K562 (cell line): ENCODE measurements at regions of chr3 and their contacts with region 1.

Region 1: GRCh38 chr3:138834359-138835212 is at the start of gene PIK3CB:
- DNase-seq: peak; percentile 91 to 94 (median 92)
- ATAC-seq: peak; percentile 88
- H3K4me3 ChIP-seq: peak within 1 kb of the TSS; percentile 99
- H3K27ac ChIP-seq: peak within 1 kb of the TSS; percentile 91
- H3K4me1 ChIP-seq: peaks cover 8 to 9% of the 10 kb centered on the region in 2 experiments; a peak in 4 of 5 replicates
- H3K27me3 ChIP-seq: no peaks in the 10 kb centered on the region
- CTCF ChIP-seq: peak; percentile 59 to 97 (median 75)
- EP300 ChIP-seq: peak; percentile 2; the same call in 1 of the 2 replicates
- POLR2A ChIP-seq: peak; percentile 94
- RAD21 ChIP-seq: peak; percentile 61 to 70
- polyA plus RNA-seq, gene PIK3CB: 15.3 to 19.6 TPM

Region 2: DNA sequence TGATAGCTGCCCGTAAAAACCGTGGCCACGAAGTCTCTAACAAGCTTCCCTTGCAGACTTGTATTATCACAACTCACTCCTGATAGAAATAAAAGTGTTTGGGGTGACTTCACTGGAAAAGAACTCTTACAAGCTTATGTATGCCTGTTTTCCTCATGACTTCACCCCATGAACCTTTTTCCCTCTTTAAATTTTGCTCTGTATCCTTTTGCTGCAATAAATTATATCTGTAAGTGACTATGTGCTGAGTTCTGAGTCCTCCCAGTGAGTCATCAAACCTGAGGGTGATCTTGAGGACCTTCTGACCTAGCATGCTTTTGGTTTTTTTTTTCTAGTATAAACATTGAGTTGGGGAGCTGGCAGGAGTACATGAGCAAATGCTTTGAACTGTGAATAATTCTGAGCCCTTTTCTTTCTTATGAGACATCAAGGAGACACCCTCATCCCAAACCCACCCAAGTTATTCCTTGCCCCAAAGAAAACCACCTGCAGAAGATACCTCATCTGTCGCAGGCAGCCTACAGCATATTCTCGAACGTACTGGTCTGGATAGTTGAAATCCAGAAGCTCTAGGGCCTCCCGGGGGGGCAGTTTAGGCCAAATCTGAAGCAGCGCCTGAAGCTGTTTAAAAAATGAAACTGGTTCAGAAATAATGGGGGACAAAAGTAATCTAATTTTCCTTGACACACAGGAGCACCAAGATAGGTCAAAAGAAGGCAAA is 140.1 kb before region 1 on chr3:
- CTCF ChIA-PET with region 1: no interaction called
- POLR2A ChIA-PET with region 1: no interaction called
- in situ Hi-C with region 1: no loop called
- intact Hi-C with region 1: loop called (anchors 10 kb)
- DNase-seq: peak in 3 of 4 experiments; percentile 21 to 76 (median 53)
- ATAC-seq: peak; percentile 79
- H3K4me3 ChIP-seq: no peak overlapping the region
- H3K27ac ChIP-seq: peak overlapping the region; percentile 62; the same call in 2 of the 3 replicates
- H3K4me1 ChIP-seq: peaks cover 0 to 16% of the 10 kb centered on the region in 2 experiments; a peak in 4 of 5 replicates
- H3K27me3 ChIP-seq: no peaks in the 10 kb centered on the region
- CTCF ChIP-seq: no peak
- EP300 ChIP-seq: peak; percentile 31; the same call in 1 of the 2 replicates
- POLR2A ChIP-seq: no peak
- RAD21 ChIP-seq: no peak

Region 3: GRCh38 chr3:138862924-138863775 is 28.6 kb after region 1 on chr3:
- CTCF ChIA-PET with region 1: no interaction called
- POLR2A ChIA-PET with region 1: interaction called, 5 read pairs
- in situ Hi-C with region 1: no loop called
- intact Hi-C with region 1: loop called (anchors 2 kb)
- DNase-seq: peak; percentile 62 to 84 (median 71)
- ATAC-seq: peak; percentile 89
- H3K4me3 ChIP-seq: no peak overlapping the region; the same call in 1 of the 2 replicates
- H3K27ac ChIP-seq: peak overlapping the region; percentile 75
- H3K4me1 ChIP-seq: peaks cover 20 to 31% of the 10 kb centered on the region in 2 experiments; a peak in 4 of 5 replicates
- H3K27me3 ChIP-seq: no peaks in the 10 kb centered on the region
- CTCF ChIP-seq: no peak
- EP300 ChIP-seq: peak; percentile 63; the same call in 1 of the 2 replicates
- POLR2A ChIP-seq: no peak
- RAD21 ChIP-seq: no peak

Region 4: GRCh38 chr3:138875754-138876664 is 41.4 kb after region 1 on chr3:
- CTCF ChIA-PET with region 1: no interaction called
- POLR2A ChIA-PET with region 1: interaction called, 3 read pairs
- in situ Hi-C with region 1: no loop called
- intact Hi-C with region 1: loop called (anchors 1 kb)
- DNase-seq: peak; percentile 91 to 98 (median 93)
- ATAC-seq: peak; percentile 94
- H3K4me3 ChIP-seq: peak overlapping the region; percentile 10
- H3K27ac ChIP-seq: peak overlapping the region; percentile 98
- H3K4me1 ChIP-seq: peaks cover 5 to 29% of the 10 kb centered on the region in 2 experiments; a peak in 3 of 5 replicates
- H3K27me3 ChIP-seq: no peaks in the 10 kb centered on the region
- CTCF ChIP-seq: no peak
- EP300 ChIP-seq: peak; percentile 99
- POLR2A ChIP-seq: peak; percentile 76
- RAD21 ChIP-seq: peak; percentile 33 to 40; a peak in 3 of 4 replicates

Region 5: GRCh38 chr3:139006051-139006716 is 171.6 kb after region 1 on chr3 and contains the start of gene PRR23A:
- CTCF ChIA-PET with region 1: no interaction called
- POLR2A ChIA-PET with region 1: no interaction called
- in situ Hi-C with region 1: no loop called
- intact Hi-C with region 1: no loop called
- DNase-seq: no peak
- ATAC-seq: no peak
- H3K4me3 ChIP-seq: no peak within 1 kb of the TSS
- H3K27ac ChIP-seq: no peak within 1 kb of the TSS
- H3K4me1 ChIP-seq: peaks cover 0 to 4% of the 10 kb centered on the region in 2 experiments; a peak in 1 of 5 replicates
- H3K27me3 ChIP-seq: no peaks in the 10 kb centered on the region
- CTCF ChIP-seq: no peak
- EP300 ChIP-seq: no peak
- POLR2A ChIP-seq: no peak
- RAD21 ChIP-seq: no peak
- polyA plus RNA-seq, gene PRR23A: not detected

Region 6: GRCh38 chr3:139074565-139075115 is 240.1 kb after region 1 on chr3:
- CTCF ChIA-PET with region 1: no interaction called
- POLR2A ChIA-PET with region 1: no interaction called
- in situ Hi-C with region 1: no loop called
- intact Hi-C with region 1: no loop called
- DNase-seq: no peak
- ATAC-seq: no peak
- H3K4me3 ChIP-seq: no peak overlapping the region
- H3K27ac ChIP-seq: no peak overlapping the region
- H3K4me1 ChIP-seq: no peaks in the 10 kb centered on the region
- H3K27me3 ChIP-seq: peaks cover 3 to 4% of the 10 kb centered on the region in 2 experiments; a peak in 2 of 5 replicates
- CTCF ChIP-seq: no peak
- EP300 ChIP-seq: no peak
- POLR2A ChIP-seq: no peak
- RAD21 ChIP-seq: no peak

Region 7: GRCh38 chr3:139664958-139665357 is 830.4 kb after region 1 on chr3:
- CTCF ChIA-PET with region 1: no interaction called
- POLR2A ChIA-PET with region 1: no interaction called
- in situ Hi-C with region 1: no loop called
- intact Hi-C with region 1: no loop called
- DNase-seq: no peak
- ATAC-seq: no peak
- H3K4me3 ChIP-seq: no peak overlapping the region
- H3K27ac ChIP-seq: no peak overlapping the region
- H3K4me1 ChIP-seq: peaks cover 0 to 4% of the 10 kb centered on the region in 2 experiments; a peak in 1 of 5 replicates
- H3K27me3 ChIP-seq: no peaks in the 10 kb centered on the region
- CTCF ChIP-seq: no peak
- EP300 ChIP-seq: no peak
- POLR2A ChIP-seq: no peak
- RAD21 ChIP-seq: no peak